ENCODE measurements at regions of chr14 and their contacts with region 1.

Region 1: DNA sequence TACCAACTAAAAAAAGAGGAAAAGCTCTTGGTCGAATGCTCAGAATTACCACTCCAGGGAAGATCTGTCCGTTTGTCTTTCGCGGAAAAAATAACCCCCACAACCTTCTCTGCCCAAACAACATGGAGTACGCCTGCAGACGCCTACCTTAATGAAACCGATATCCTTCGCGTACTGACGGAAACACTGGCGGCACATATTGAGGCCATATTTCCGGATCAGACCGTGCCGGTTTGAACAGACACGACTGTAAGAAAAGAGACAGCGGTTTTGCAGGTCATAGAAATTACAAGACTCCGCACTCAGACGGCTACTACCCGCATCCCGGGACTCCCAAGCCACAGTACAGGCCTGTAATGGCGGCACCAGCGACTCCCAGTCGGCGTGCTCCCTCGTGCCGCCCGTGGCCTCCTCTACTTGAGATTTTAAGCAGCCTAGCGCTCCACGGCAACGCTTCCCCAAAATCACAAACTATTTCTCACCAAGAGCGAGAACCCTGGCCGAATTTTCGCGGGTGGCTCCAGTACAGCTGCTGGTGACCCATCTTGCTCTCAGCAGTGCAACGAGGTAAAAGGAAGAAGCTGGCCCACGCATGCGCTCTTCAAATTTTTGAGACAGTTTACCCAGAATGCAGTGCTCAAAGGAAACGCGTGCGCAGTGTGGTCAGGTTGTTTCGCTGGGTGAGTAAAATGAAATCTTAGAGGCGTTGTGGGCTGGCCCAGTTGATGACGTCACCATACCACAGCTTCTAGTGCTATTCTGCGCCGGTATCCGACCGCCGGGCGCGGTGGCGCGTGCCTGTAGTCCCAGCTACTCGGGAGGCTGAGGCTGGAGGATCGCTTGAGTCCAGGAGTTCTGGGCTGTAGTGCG is at the start of gene RPS29:
- DNase-seq: peak; percentile 93
- CTCF ChIP-seq: no peak

Region 2: GRCh38 chr14:49620182-49621113 is 34.4 kb after region 1 on chr14 and contains the starts of genes MGAT2 and RPL36AL:
- CTCF ChIA-PET with region 1: interaction called, 13 read pairs
- POLR2A ChIA-PET with region 1: interaction called, 7 read pairs
- DNase-seq: peak; percentile 97
- CTCF ChIP-seq: peak; percentile 17